ENCODE measurements at regions of chr15 and their contacts with region 1.

Region 1: GRCh38 chr15:75367913-75368688 is at the start of gene MAN2C1:
- DNase-seq: peak; percentile 96
- ATAC-seq: peak; percentile 95
- H3K4me3 Mint-ChIP-seq: peak within 1 kb of the TSS; percentile 92
- H3K27ac Mint-ChIP-seq: peak within 1 kb of the TSS; percentile 94
- H3K4me1 Mint-ChIP-seq: peaks cover 23% of the 10 kb centered on the region
- H3K27me3 Mint-ChIP-seq: no peaks in the 10 kb centered on the region
- CTCF ChIP-seq: no peak
- total RNA-seq, gene MAN2C1: 170 to 181 TPM

Region 2: GRCh38 chr15:75380773-75381172 is 12.7 kb after region 1 on chr15:
- CTCF ChIA-PET with region 1: interaction called, 32 read pairs
- POLR2A ChIA-PET with region 1: interaction called, 11 read pairs
- intact Hi-C with region 1: no loop called
- DNase-seq: no peak
- ATAC-seq: no peak
- H3K4me3 Mint-ChIP-seq: no peak overlapping the region
- H3K27ac Mint-ChIP-seq: peak overlapping the region; percentile 34
- H3K4me1 Mint-ChIP-seq: peaks cover 4% of the 10 kb centered on the region
- H3K27me3 Mint-ChIP-seq: no peaks in the 10 kb centered on the region
- CTCF ChIP-seq: no peak

Region 3: DNA sequence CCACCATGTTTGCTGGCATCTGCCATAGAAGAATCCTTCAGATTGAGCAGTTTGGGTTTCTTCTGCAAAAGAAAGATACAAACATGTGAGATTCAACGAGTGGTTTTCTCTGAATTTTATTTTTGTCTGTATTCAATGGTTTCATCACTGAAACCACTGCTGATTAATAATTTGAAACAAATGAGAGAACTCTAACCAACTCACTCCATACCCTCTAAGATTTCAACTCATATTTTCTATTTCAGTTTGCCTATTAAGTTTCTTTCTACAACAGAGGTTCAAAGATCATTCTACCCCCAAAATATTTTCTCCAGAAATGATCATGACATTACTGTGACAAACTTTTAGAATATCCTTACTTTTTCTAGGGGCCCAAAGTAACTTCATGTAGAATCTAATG is 39.0 kb after region 1 on chr15:
- CTCF ChIA-PET with region 1: interaction called, 15 read pairs
- POLR2A ChIA-PET with region 1: interaction called, 7 read pairs
- intact Hi-C with region 1: no loop called
- DNase-seq: no peak
- ATAC-seq: peak; percentile 66
- H3K4me3 Mint-ChIP-seq: no peak overlapping the region
- H3K27ac Mint-ChIP-seq: peak overlapping the region; percentile 78
- H3K4me1 Mint-ChIP-seq: peaks cover 22% of the 10 kb centered on the region
- H3K27me3 Mint-ChIP-seq: no peaks in the 10 kb centered on the region
- CTCF ChIP-seq: no peak

Region 4: DNA sequence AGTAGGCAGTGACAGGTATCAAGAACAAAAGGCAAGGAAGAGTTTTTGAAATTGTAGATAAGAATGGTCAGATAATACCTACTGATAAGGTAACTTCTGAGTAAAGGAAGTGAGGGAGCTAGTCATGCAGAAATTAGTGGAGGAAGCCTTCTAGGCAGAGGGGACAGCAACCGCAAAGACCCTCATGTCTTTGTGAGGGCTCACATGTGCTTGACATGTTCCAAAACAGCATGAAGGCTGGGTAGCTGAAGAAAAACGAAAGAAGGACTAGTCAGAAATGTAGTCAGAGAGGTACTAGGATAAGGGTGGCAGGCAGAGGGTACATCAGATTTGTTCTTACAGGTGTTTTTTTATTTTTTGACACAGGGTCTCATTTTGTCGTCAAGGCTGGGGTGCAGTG is 78.0 kb after region 1 on chr15:
- CTCF ChIA-PET with region 1: interaction called, 24 read pairs
- POLR2A ChIA-PET with region 1: interaction called, 28 read pairs
- intact Hi-C with region 1: loop called (anchors 5 kb)
- DNase-seq: peak; percentile 41
- ATAC-seq: no peak
- H3K4me3 Mint-ChIP-seq: no peak overlapping the region
- H3K27ac Mint-ChIP-seq: peak overlapping the region; percentile 86
- H3K4me1 Mint-ChIP-seq: peaks cover 59% of the 10 kb centered on the region
- H3K27me3 Mint-ChIP-seq: no peaks in the 10 kb centered on the region
- CTCF ChIP-seq: no peak

Region 5: DNA sequence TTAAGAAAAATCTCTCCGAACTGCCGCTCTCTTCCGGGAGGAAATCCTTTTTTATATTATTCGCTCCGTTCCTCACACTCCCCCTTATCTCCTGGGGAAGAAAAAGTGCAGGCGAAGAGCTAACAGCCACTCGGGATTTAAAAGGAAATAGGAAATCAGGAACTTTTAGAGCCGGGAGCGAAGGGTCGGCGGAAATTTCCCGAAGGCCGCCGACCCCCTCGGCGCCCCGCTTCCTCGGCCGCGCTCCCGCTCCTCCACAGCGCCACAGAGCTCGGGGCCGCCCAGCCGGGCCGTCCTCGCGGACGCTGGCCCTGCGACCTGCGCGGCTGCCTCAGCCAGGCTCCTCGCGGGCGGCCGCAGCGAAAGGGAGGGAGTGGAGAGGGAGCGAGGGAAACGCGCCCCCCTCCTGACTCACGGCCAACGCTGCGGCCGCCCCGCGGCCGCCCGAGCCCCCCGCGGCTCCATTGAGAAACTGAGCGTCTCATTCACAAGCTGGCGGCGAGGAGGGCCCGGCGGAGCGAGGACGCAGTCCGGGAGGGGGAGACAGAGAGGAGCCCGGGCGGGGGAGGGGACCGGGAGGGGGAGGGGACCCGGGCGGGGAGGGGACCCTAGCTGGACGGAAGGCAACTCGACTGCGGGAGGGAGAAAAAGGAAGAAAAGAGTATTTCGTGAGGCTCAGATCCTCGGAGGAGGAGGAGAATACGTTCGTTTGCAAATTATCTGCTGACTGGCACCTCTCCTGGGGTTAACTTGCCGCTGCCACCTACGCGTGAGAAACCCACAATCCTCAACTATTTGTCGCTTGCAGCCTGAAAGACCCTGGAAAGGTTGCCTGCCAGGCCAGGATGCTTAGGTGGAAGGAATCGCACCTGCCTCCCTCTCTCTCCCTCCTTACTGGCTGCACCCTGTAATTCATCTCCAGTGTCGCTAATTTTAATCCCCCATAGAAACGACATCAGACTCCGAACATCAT is 211.1 kb after region 1 on chr15 and contains the start of gene PTPN9:
- CTCF ChIA-PET with region 1: interaction called, 12 read pairs
- POLR2A ChIA-PET with region 1: interaction called, 4 read pairs
- intact Hi-C with region 1: no loop called
- DNase-seq: peak; percentile 79
- ATAC-seq: peak; percentile 89
- H3K4me3 Mint-ChIP-seq: peak within 1 kb of the TSS; percentile 88
- H3K27ac Mint-ChIP-seq: peak within 1 kb of the TSS; percentile 91
- H3K4me1 Mint-ChIP-seq: peaks cover 18% of the 10 kb centered on the region
- H3K27me3 Mint-ChIP-seq: no peaks in the 10 kb centered on the region
- CTCF ChIP-seq: peak; percentile 71
- total RNA-seq, gene PTPN9: 12.3 to 12.9 TPM

Region 6: DNA sequence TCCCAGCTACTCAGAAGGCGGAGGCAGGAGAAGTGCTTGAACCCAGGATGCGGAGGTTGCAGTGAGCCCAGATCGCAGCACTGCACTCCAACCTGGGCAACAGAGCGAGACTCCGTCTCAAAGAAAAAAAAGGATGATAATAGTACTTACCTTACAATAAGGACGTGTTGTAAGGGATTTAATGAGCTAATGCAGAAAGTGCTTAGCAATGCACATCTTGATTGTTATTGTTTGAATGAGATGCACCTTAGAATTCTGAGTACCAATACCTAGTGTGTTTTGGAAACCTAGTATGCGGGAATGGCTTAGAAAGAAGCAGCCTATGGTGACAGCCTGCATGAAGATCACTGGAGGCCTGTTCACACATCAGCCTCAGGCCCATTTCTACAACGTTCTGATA is 237.9 kb after region 1 on chr15:
- CTCF ChIA-PET with region 1: no interaction called
- POLR2A ChIA-PET with region 1: no interaction called
- intact Hi-C with region 1: no loop called
- DNase-seq: no peak
- ATAC-seq: no peak
- H3K4me3 Mint-ChIP-seq: peak overlapping the region; percentile 2
- H3K27ac Mint-ChIP-seq: peak overlapping the region; percentile 89
- H3K4me1 Mint-ChIP-seq: peaks cover 39% of the 10 kb centered on the region
- H3K27me3 Mint-ChIP-seq: no peaks in the 10 kb centered on the region
- CTCF ChIP-seq: no peak

Region 7: DNA sequence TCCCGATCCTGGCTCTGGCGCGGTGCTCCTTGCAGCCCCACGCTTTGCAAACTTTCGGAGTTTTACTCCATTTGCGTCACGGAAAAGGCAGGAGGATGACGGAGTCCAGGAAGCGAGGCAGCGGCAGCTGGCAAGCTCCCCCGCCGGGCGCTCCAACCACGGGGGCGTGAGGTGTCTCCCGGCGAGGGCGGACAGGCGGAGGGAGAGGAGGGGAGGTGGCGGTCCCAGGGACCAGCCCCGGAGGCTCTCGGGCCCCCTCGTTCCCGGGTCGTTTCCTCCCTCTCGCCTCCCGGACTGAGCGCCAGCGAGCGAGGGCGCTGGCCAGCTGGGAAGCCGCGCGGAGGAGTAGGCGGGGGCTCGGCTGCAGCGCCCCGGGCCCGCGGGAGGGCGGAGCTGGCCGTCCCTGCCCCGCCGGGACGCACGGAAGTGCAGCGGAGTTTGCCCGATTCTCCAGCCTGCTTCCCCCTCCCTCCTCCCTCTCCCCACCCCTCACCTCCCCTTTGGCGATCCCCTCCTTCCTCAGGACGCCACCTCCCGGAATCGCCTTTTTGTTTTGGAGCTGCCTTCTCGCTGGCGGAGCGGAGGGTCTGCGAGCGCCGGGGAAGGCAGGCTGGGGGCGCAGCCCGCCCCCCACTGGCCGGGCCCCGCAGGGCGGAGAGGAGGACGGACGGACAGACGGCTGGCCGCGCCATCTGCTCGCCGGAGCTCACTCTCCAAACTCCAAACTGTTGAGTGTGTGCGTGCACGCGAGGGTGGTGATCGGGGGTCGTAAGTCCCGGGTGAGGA is 279.5 kb after region 1 on chr15 and contains the start of gene SNX33:
- CTCF ChIA-PET with region 1: interaction called, 37 read pairs
- POLR2A ChIA-PET with region 1: interaction called, 9 read pairs
- intact Hi-C with region 1: loop called (anchors 10 kb)
- DNase-seq: peak; percentile 75
- ATAC-seq: peak; percentile 56
- H3K4me3 Mint-ChIP-seq: peak within 1 kb of the TSS; percentile 79
- H3K27ac Mint-ChIP-seq: peak within 1 kb of the TSS; percentile 60
- H3K4me1 Mint-ChIP-seq: peaks cover 20% of the 10 kb centered on the region
- H3K27me3 Mint-ChIP-seq: no peaks in the 10 kb centered on the region
- CTCF ChIP-seq: peak; percentile 28
- total RNA-seq, gene SNX33: 1.7 to 1.8 TPM